Activated CD4-positive, alpha-beta T cell treated with anti-CD3 and anti-CD28 coated beads for 36 hours (primary cell): ENCODE measurements at regions of chr14 and their contacts with region 1.

Region 1: GRCh38 chr14:81220830-81221578 is at the start of gene GTF2A1:
- DNase-seq: peak; percentile 96
- ATAC-seq: peak; percentile 79
- H3K4me3 Mint-ChIP-seq: peak within 1 kb of the TSS; percentile 99
- H3K27ac Mint-ChIP-seq: peak within 1 kb of the TSS; percentile 100
- H3K4me1 Mint-ChIP-seq: peaks cover 29% of the 10 kb centered on the region
- H3K27me3 Mint-ChIP-seq: no peaks in the 10 kb centered on the region
- total RNA-seq, gene GTF2A1: 40.3 to 57.8 TPM

Region 2: DNA sequence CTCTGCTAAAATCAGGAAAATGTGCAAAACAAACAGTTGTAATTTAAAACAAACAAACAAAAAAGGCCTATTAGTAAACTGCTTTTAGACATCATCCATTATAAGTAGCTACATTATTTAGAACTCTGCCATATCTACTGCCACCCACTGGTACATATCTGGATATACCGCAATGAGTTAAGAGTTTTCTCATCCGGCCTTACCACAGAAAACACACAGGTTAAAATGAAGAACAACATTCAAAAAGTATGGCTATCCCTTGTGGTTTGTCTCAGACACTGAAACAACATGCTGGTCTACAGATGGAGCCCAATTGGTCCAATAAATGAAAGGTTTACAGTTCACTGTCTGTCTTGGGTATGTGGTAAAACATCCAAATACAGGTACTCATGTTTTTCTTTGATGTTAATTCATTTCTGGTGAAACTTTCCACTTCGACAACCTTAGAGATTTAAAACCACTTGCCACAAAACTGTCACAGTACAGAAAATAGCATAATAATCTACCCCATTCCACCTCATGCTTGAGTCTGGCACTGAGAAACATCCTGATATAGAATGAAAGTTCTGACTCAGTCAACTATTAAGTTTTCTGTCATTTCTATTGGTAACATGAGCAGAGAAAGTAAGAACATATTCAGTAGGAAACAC is 633.8 kb before region 1 on chr14:
- CTCF ChIA-PET with region 1: no interaction called
- POLR2A ChIA-PET with region 1: no interaction called
- intact Hi-C with region 1: loop called in 1 of 2 experiments (anchors 2 kb)
- DNase-seq: peak; percentile 18
- ATAC-seq: peak; percentile 92
- H3K4me3 Mint-ChIP-seq: no peak overlapping the region
- H3K27ac Mint-ChIP-seq: peak overlapping the region; percentile 47
- H3K4me1 Mint-ChIP-seq: peaks cover 20% of the 10 kb centered on the region
- H3K27me3 Mint-ChIP-seq: no peaks in the 10 kb centered on the region

Region 3: GRCh38 chr14:80941241-80942182 is 279.5 kb before region 1 on chr14 and contains the start of gene CEP128:
- CTCF ChIA-PET with region 1: no interaction called
- POLR2A ChIA-PET with region 1: interaction called, 9 read pairs
- intact Hi-C with region 1: loop called (anchors 1 to 5 kb)
- DNase-seq: peak; percentile 93
- ATAC-seq: peak; percentile 85
- H3K4me3 Mint-ChIP-seq: peak within 1 kb of the TSS; percentile 90
- H3K27ac Mint-ChIP-seq: peak within 1 kb of the TSS; percentile 96
- H3K4me1 Mint-ChIP-seq: peaks cover 33% of the 10 kb centered on the region
- H3K27me3 Mint-ChIP-seq: no peaks in the 10 kb centered on the region
- total RNA-seq, gene CEP128: 18.6 to 21.6 TPM

Region 4: GRCh38 chr14:80996049-80996901 is 224.7 kb before region 1 on chr14:
- CTCF ChIA-PET with region 1: interaction called, 3 read pairs
- POLR2A ChIA-PET with region 1: interaction called, 3 read pairs
- intact Hi-C with region 1: loop called in 1 of 2 experiments (anchors 5 kb)
- DNase-seq: peak; percentile 35
- ATAC-seq: peak; percentile 98
- H3K4me3 Mint-ChIP-seq: no peak overlapping the region
- H3K27ac Mint-ChIP-seq: no peak overlapping the region
- H3K4me1 Mint-ChIP-seq: peaks cover 5% of the 10 kb centered on the region
- H3K27me3 Mint-ChIP-seq: peaks cover 12% of the 10 kb centered on the region

Region 5: GRCh38 chr14:81193924-81194633 is 26.9 kb before region 1 on chr14:
- CTCF ChIA-PET with region 1: interaction called, 3 read pairs
- POLR2A ChIA-PET with region 1: no interaction called
- intact Hi-C with region 1: loop called in 1 of 2 experiments (anchors 2 kb)
- DNase-seq: peak; percentile 51
- ATAC-seq: peak; percentile 78
- H3K4me3 Mint-ChIP-seq: no peak overlapping the region
- H3K27ac Mint-ChIP-seq: no peak overlapping the region
- H3K4me1 Mint-ChIP-seq: peaks cover 44% of the 10 kb centered on the region
- H3K27me3 Mint-ChIP-seq: no peaks in the 10 kb centered on the region

Region 6: DNA sequence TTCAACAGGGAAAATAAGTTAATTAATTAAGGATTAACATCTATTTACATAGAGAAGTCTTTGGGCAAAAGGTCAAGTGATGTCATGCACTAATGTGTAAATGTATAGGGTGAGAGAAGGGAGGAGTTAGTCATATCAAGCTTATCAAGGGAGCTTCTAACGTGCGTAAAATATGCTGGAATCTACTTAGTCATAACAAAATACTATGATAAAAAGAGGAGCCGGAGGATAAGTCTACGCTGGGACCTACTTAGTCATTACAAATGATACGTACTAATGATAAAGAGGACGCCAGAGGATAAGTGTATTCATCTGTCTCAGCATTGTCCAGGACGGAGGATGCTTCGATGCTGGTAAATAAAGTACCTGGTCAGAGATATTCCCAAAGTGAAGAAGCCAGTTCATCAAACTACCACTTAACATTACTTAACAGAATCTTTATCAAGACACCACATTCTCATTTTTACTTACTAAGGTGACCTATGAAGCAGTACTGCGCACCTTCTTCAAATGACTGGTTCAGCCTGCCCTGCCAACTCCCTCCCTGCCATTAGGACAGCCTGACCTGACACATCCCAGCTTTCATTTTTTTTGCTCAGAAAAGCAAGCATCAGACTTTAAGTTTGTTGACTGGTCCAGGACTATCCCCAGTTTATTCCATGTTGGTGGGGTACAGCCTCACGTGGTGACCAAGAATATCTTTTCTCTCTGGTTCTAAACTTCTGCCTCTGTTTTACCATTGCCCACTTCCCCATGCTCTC is 66.2 kb after region 1 on chr14:
- CTCF ChIA-PET with region 1: no interaction called
- POLR2A ChIA-PET with region 1: no interaction called
- intact Hi-C with region 1: no loop called
- DNase-seq: no peak
- ATAC-seq: no peak
- H3K4me3 Mint-ChIP-seq: no peak overlapping the region
- H3K27ac Mint-ChIP-seq: no peak overlapping the region
- H3K4me1 Mint-ChIP-seq: no peaks in the 10 kb centered on the region
- H3K27me3 Mint-ChIP-seq: peaks cover 5% of the 10 kb centered on the region

Region 7: GRCh38 chr14:81436296-81437138 is 215.5 kb after region 1 on chr14:
- CTCF ChIA-PET with region 1: no interaction called
- POLR2A ChIA-PET with region 1: interaction called, 4 read pairs
- intact Hi-C with region 1: loop called in 1 of 2 experiments (anchors 1 kb)
- DNase-seq: peak; percentile 69
- ATAC-seq: peak; percentile 88
- H3K4me3 Mint-ChIP-seq: peak overlapping the region; percentile 55
- H3K27ac Mint-ChIP-seq: no peak overlapping the region
- H3K4me1 Mint-ChIP-seq: peaks cover 10% of the 10 kb centered on the region
- H3K27me3 Mint-ChIP-seq: peaks cover 69% of the 10 kb centered on the region

Region 8: GRCh38 chr14:81474148-81474492 is 253.1 kb after region 1 on chr14:
- CTCF ChIA-PET with region 1: no interaction called
- POLR2A ChIA-PET with region 1: interaction called, 10 read pairs
- intact Hi-C with region 1: loop called (anchors 2 kb)
- DNase-seq: no peak
- ATAC-seq: peak; percentile 71
- H3K4me3 Mint-ChIP-seq: peak overlapping the region; percentile 36
- H3K27ac Mint-ChIP-seq: peak overlapping the region; percentile 87
- H3K4me1 Mint-ChIP-seq: peaks cover 59% of the 10 kb centered on the region
- H3K27me3 Mint-ChIP-seq: no peaks in the 10 kb centered on the region